Esophagus muscularis mucosa (tissue), 4 donors: ENCODE measurements at regions of chr3 and their contacts with region 1.

Region 1: GRCh38 chr3:43503067-43503728 is 118.6 kb downstream of the ANO10 start:
- DNase-seq: no peak
- H3K4me3 ChIP-seq: no peak overlapping the region
- H3K27ac ChIP-seq: peak overlapping the region in 3 of 4 donors; percentile 22 to 26 (median 24)
- H3K4me1 ChIP-seq: peaks cover 0 to 19% (median 10%) of the 10 kb centered on the region in 4 donors
- H3K27me3 ChIP-seq: no peaks in the 10 kb centered on the region
- CTCF ChIP-seq: peak; percentile 51 to 58 (median 53)
- EP300 ChIP-seq: no peak
- POLR2A ChIP-seq: no peak

Region 2: GRCh38 chr3:42961633-42962032 is 541.6 kb before region 1 on chr3:
- intact Hi-C with region 1: loop called (anchors 10 kb)
- DNase-seq: no peak
- H3K4me3 ChIP-seq: no peak overlapping the region
- H3K27ac ChIP-seq: no peak overlapping the region
- H3K4me1 ChIP-seq: peaks cover 0 to 9% (median 8%) of the 10 kb centered on the region in 4 donors
- H3K27me3 ChIP-seq: no peaks in the 10 kb centered on the region
- CTCF ChIP-seq: peak; percentile 72 to 74 (median 72)
- EP300 ChIP-seq: no peak
- POLR2A ChIP-seq: no peak

Region 3: GRCh38 chr3:43162230-43163084 is 340.7 kb before region 1 on chr3:
- intact Hi-C with region 1: loop called (anchors 2 kb)
- DNase-seq: peak; percentile 84
- H3K4me3 ChIP-seq: peak overlapping the region in 1 of 4 donors; percentile 26
- H3K27ac ChIP-seq: peak overlapping the region in 1 of 4 donors; percentile 18
- H3K4me1 ChIP-seq: peaks cover 5 to 13% (median 9%) of the 10 kb centered on the region in 4 donors
- H3K27me3 ChIP-seq: no peaks in the 10 kb centered on the region
- CTCF ChIP-seq: peak; percentile 36 to 50 (median 43)
- EP300 ChIP-seq: no peak
- POLR2A ChIP-seq: no peak

Region 4: GRCh38 chr3:43223670-43224364 is 279.4 kb before region 1 on chr3:
- intact Hi-C with region 1: loop called (anchors 10 kb)
- DNase-seq: no peak
- H3K4me3 ChIP-seq: no peak overlapping the region
- H3K27ac ChIP-seq: no peak overlapping the region
- H3K4me1 ChIP-seq: no peaks in the 10 kb centered on the region
- H3K27me3 ChIP-seq: no peaks in the 10 kb centered on the region
- CTCF ChIP-seq: peak; percentile 30 to 52 (median 30)
- EP300 ChIP-seq: no peak
- POLR2A ChIP-seq: no peak

Region 5: GRCh38 chr3:43286115-43286840 is 216.9 kb before region 1 on chr3 and contains the start of gene SNRK:
- intact Hi-C with region 1: loop called (anchors 10 kb)
- DNase-seq: peak; percentile 96
- H3K4me3 ChIP-seq: peak within 1 kb of the TSS; percentile 62 to 92 (median 70)
- H3K27ac ChIP-seq: peak within 1 kb of the TSS; percentile 86 to 96 (median 91)
- H3K4me1 ChIP-seq: peaks cover 35 to 49% (median 47%) of the 10 kb centered on the region in 4 donors
- H3K27me3 ChIP-seq: no peaks in the 10 kb centered on the region
- CTCF ChIP-seq: peak in 2 of 3 experiments; percentile 45
- EP300 ChIP-seq: no peak
- POLR2A ChIP-seq: no peak
- total RNA-seq, gene SNRK: 30.7 to 50.4 (median 45.8) TPM

Region 6: DNA sequence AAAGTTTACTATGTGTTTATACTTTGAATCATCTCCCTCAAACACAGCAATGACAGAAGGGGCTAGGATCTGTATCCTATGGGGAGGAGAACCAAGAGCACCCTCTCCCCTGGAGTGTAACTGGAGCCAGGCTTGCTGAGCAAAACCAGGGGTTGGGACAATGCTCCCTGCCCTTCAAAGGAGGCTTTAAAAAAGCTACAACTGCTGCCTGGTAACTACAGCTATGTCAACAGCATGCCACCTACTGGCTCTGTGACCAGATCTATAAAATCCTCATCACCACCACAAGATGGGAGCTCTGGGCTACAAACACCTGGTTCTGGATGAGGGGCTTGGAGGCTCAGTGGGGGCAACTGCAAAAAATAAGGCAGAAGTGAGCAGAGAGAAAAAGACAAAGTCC is 56.8 kb after region 1 on chr3:
- intact Hi-C with region 1: no loop called
- DNase-seq: no peak
- H3K4me3 ChIP-seq: no peak overlapping the region
- H3K27ac ChIP-seq: no peak overlapping the region
- H3K4me1 ChIP-seq: no peaks in the 10 kb centered on the region
- H3K27me3 ChIP-seq: no peaks in the 10 kb centered on the region
- CTCF ChIP-seq: no peak
- EP300 ChIP-seq: no peak
- POLR2A ChIP-seq: no peak